Testis (tissue), 5 donors: ENCODE measurements at regions of chr19 and their contacts with region 1.

Region 1: GRCh38 chr19:39328046-39328705 is 7.5 kb upstream of the LRFN1 start:
- DNase-seq: peak; percentile 95
- H3K4me3 ChIP-seq: no peak overlapping the region
- H3K27ac ChIP-seq: no peak overlapping the region
- H3K4me1 ChIP-seq: peaks cover 8% of the 10 kb centered on the region
- H3K27me3 ChIP-seq: no peaks in the 10 kb centered on the region
- CTCF ChIP-seq: peak; percentile 94 to 98 (median 97)
- POLR2A ChIP-seq: no peak

Region 2: GRCh38 chr19:39125554-39126311 is 202.4 kb before region 1 on chr19 and contains the start of gene PAK4:
- intact Hi-C with region 1: loop called (anchors 5 kb)
- DNase-seq: peak; percentile 98
- H3K4me3 ChIP-seq: peak within 1 kb of the TSS; percentile 76 to 97
- H3K27ac ChIP-seq: peak within 1 kb of the TSS; percentile 92 to 93
- H3K4me1 ChIP-seq: peaks cover 46% of the 10 kb centered on the region
- H3K27me3 ChIP-seq: no peaks in the 10 kb centered on the region
- CTCF ChIP-seq: no peak
- POLR2A ChIP-seq: peak; percentile 13
- total RNA-seq, gene PAK4: 84.3 to 88.3 TPM

Region 3: DNA sequence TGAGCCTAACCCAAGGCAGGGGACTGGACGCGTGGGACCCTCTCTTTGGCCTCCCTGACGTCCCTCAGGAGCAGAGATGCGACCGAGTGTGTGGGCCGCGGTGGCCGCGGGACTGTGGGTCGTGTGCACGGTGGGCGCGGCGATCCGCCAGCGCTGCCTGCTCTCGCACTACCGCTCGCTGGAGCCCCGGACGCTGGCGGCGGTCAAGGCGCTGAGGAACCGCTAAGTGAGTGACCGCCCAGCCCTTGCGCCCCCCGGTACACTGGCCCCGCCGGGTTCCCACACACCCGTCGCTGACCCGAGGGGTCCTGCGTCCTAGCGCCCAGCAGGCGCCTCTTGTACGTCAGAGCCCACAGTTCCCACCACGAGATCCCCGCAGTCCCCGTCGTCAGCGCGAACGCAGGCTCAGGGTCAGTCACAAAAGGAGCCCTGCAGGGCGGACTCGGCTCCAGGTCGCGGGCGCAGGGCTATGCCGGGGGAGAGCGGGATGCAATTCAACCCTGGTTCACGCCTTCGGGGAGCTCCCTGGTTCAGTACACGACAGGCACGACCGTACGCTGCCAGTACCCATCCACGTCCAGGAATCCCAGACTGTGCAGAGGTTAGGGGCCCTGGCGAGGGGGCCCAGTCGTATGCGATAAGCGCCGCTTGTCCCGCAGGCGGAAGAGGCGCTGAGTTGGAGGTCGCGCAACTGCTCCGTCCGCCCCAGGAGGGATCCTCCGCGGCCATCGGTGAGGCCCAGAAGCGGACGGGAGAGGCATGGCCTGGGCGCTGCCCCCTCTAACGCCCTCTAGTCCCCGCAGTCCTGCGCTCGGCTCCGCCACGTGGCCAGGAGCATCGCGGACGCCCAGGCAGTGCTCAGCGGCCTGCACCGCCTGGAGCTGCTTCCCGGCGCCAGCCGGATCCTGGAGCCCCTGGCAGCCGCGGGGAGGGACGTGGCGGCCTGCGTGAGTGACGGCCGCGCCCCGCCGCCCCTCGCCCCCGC is 63.6 kb before region 1 on chr19:
- intact Hi-C with region 1: no loop called
- DNase-seq: peak; percentile 22
- H3K4me3 ChIP-seq: peak overlapping the region; percentile 12 to 39
- H3K27ac ChIP-seq: no peak overlapping the region
- H3K4me1 ChIP-seq: peaks cover 2% of the 10 kb centered on the region
- H3K27me3 ChIP-seq: no peaks in the 10 kb centered on the region
- CTCF ChIP-seq: no peak
- POLR2A ChIP-seq: no peak